ENCODE measurements at regions of chr1 and their contacts with region 1.

Region 1: GRCh38 chr1:41239988-41240610 is 2.0 kb downstream of the SCMH1 start:
- DNase-seq: no peak
- ATAC-seq: peak in 1 of 8 donors; percentile 28
- H3K4me3 ChIP-seq: peak overlapping the region in 3 of 10 donors; percentile 87 to 94 (median 89)
- H3K27ac ChIP-seq: peak overlapping the region in 6 of 10 donors; percentile 93 to 99 (median 97)
- H3K4me1 ChIP-seq: peaks cover 0 to 62% (median 48%) of the 10 kb centered on the region in 9 donors
- H3K27me3 ChIP-seq: no peaks in the 10 kb centered on the region
- CTCF ChIP-seq: peak in 5 of 9 donors; percentile 15 to 43 (median 39)

Region 2: DNA sequence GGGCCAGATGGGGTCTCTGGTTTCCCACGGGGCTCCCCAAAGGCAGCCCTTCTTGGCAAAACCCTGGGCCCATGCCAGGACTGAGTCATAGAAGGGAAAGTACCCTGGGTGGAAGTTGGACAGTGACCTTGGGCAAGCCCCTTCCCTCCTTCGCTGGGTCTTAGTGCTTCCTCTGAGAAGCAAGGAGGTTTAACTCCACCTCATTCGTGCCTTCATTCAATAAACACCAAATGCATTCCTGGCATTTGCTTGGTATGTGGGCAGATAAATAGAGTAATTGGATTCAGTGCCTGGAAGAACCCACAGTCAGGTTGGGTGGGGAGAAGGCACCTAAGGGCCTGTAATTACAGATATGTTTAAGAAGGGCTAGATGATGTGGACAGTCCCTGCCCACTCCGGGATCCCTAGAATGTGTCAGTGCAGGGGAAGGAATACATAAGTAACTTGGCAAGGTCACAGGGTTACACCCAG is 341.6 kb before region 1 on chr1:
- intact Hi-C with region 1: no loop called
- DNase-seq: no peak
- ATAC-seq: no peak
- H3K4me3 ChIP-seq: no peak overlapping the region
- H3K27ac ChIP-seq: no peak overlapping the region
- H3K4me1 ChIP-seq: peaks cover 0 to 22% (median 0%) of the 10 kb centered on the region in 9 donors
- H3K27me3 ChIP-seq: no peaks in the 10 kb centered on the region
- CTCF ChIP-seq: no peak

Region 3: DNA sequence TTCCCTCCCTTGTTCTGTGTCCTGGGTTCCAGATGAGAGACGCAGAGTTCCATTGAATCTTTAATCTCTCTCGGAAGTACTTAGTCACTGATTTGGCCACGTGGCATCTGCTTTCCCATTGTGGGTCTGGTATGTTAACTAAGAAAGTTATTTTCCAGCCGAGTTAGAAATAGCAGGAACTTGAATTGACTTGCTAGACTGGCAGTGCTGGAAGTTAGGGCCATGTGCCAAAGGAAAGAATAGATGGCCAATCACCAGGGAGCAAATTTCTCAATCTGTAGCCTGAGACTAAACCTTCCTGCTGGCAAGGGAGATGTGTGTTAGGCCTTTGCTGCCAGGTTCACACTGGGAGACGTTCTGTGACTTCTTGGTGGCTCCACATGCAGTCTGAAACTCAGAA is 194.4 kb before region 1 on chr1:
- intact Hi-C with region 1: loop called in 1 of 10 experiments (anchors 10 kb)
- DNase-seq: peak in 1 of 2 donors; percentile 51
- ATAC-seq: peak; percentile 37 to 90 (median 82)
- H3K4me3 ChIP-seq: no peak overlapping the region
- H3K27ac ChIP-seq: peak overlapping the region in 9 of 10 donors; percentile 45 to 72 (median 61)
- H3K4me1 ChIP-seq: peaks cover 7 to 35% (median 31%) of the 10 kb centered on the region in 9 donors
- H3K27me3 ChIP-seq: no peaks in the 10 kb centered on the region
- CTCF ChIP-seq: no peak

Region 4: DNA sequence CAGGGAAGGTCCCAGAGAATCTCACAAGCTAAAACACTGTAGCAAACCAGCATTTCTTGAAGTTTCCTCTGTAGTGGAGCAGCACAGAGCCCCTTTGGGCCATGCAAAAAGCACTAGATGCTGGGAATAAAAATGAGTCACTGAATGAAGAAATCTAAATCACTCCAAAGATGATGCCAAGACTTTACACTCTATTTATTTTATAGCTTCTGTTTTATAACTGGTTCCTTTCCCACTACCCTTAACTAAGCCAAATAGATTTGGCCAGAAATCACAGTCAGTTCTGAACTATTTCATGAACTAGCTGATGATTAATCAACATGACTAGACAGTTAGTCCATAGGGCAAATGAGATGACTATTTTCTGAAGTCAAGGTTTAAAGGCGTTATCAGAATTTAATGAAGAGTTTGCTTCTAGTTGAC is 87.5 kb before region 1 on chr1:
- intact Hi-C with region 1: loop called in 1 of 10 experiments (anchors 5 kb)
- DNase-seq: no peak
- ATAC-seq: peak in 6 of 8 donors; percentile 40 to 77 (median 52)
- H3K4me3 ChIP-seq: no peak overlapping the region
- H3K27ac ChIP-seq: peak overlapping the region in 4 of 10 donors; percentile 28 to 82 (median 38)
- H3K4me1 ChIP-seq: peaks cover 0 to 27% (median 17%) of the 10 kb centered on the region in 9 donors
- H3K27me3 ChIP-seq: no peaks in the 10 kb centered on the region
- CTCF ChIP-seq: no peak

Region 5: DNA sequence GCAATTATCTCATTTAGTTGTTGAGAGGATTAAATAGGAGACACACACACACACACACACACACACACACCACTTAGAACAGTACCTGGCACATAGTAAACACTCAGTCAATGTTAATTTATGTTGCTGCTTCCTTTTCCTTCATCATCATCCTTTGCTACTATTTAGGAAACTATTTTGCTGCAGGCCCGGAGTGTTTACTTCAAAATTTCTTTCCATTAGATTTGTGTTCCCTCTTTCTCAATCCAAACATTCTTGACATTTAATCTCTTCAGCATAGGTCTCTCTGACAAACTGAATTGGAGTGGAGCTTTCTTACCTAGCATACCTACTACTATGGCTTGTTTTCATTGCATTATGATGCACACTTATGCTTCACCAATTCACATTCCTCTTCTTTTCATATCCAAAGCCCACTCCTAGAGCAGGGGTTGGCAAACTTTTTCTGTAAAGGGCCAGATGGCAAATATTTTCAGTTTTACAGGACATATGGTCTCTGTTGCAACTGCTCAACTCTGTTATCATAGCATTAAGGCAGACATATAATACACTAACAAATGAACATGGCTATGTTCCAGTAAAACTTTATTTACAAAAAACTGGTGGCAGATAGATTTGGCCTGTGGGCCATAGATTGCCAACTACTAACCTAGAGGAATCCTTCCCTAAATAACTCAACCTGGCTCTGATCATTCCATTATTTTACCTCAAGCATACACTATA is 47.5 kb before region 1 on chr1:
- intact Hi-C with region 1: no loop called
- DNase-seq: no peak
- ATAC-seq: no peak
- H3K4me3 ChIP-seq: no peak overlapping the region
- H3K27ac ChIP-seq: no peak overlapping the region
- H3K4me1 ChIP-seq: peaks cover 0 to 7% (median 3%) of the 10 kb centered on the region in 9 donors
- H3K27me3 ChIP-seq: no peaks in the 10 kb centered on the region
- CTCF ChIP-seq: no peak